A673 (cell line): ENCODE measurements at regions of chr6 and their contacts with region 1.

Region 1: GRCh38 chr6:10060004-10060403 is 354.9 kb downstream of the TFAP2A start:
- DNase-seq: no peak
- H3K4me3 ChIP-seq: no peak overlapping the region
- H3K27ac ChIP-seq: no peak overlapping the region
- H3K4me1 ChIP-seq: no peaks in the 10 kb centered on the region
- H3K27me3 ChIP-seq: no peaks in the 10 kb centered on the region
- CTCF ChIP-seq: no peak

Region 2: GRCh38 chr6:10048370-10049298 is 11.4 kb before region 1 on chr6:
- CTCF ChIA-PET with region 1: no interaction called
- POLR2A ChIA-PET with region 1: no interaction called
- intact Hi-C with region 1: loop called (anchors 1 kb)
- DNase-seq: no peak
- H3K4me3 ChIP-seq: no peak overlapping the region
- H3K27ac ChIP-seq: no peak overlapping the region
- H3K4me1 ChIP-seq: no peaks in the 10 kb centered on the region
- H3K27me3 ChIP-seq: no peaks in the 10 kb centered on the region
- CTCF ChIP-seq: no peak